Calu3 (cell line): ENCODE measurements at regions of chrX and their contacts with region 1.

Region 1: DNA sequence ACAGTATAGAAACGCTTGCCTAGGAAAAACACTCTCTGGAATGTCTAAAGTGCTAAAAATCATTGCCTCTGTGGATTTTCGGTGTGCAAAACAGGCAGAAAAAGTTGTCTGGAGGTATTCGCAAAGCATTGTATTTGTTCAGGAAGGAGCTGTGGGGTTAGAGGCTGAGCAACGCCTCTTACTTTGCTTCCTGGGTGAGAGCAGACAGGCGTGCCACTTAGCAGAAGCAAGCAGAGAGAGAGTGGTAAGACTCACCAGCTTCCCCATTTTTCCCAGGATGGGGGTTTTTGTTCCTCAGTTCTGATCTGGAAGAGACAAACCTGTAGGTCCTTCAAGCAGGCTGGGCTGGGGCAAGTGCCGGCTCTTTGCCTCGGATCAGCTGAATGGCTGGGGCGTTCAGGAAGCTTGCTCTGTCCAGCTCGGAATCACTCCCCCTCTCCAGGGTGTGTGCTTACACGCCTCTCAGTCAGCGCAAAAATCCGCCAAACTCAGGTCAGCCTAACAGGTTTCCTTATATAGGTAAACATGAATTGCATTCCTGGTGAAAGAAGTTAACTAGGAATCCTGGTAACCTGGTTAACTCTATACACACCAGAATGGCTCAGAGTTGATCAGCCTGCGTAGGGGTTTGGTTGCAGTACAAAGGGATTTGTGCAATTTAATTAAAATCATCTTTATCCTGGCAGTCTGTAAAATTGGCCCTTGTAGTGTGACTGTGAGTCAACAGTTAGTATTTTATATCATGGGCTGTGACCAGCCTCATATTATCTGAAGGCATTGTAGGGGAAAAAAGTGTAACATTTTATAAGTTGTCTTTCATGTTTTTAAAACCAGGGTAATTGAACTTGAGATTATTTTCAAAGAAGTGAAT is 213.1 kb upstream of the MID1 start:
- DNase-seq: peak; percentile 74
- H3K4me3 Mint-ChIP-seq: peak overlapping the region; percentile 76
- H3K27ac Mint-ChIP-seq: peak overlapping the region; percentile 71
- H3K4me1 Mint-ChIP-seq: peaks cover 5% of the 10 kb centered on the region
- H3K27me3 Mint-ChIP-seq: no peaks in the 10 kb centered on the region
- CTCF ChIP-seq: no peak

Region 2: DNA sequence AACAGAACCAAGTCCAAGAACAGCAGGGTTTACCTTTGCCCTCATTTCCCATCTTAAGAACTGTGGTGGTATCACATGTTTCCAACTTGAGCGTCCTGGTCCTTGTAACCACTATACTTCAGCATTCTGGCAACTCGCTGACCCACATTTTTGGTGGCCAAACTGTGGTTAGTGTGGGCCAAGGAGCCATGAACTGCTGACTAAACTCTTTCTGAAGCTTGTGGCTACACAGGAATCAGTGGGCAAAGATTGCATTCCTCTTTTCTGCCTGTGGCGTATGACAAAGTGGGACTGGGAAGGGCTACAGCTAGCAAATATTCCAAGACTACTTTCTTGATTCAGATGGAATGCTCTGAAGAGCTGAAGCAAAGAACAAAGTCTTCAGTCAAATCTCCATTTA is 106.9 kb before region 1 on chrX:
- CTCF ChIA-PET with region 1: no interaction called
- intact Hi-C with region 1: no loop called
- DNase-seq: no peak
- H3K4me3 Mint-ChIP-seq: no peak overlapping the region
- H3K27ac Mint-ChIP-seq: no peak overlapping the region
- H3K4me1 Mint-ChIP-seq: no peaks in the 10 kb centered on the region
- H3K27me3 Mint-ChIP-seq: no peaks in the 10 kb centered on the region
- CTCF ChIP-seq: no peak

Region 3: DNA sequence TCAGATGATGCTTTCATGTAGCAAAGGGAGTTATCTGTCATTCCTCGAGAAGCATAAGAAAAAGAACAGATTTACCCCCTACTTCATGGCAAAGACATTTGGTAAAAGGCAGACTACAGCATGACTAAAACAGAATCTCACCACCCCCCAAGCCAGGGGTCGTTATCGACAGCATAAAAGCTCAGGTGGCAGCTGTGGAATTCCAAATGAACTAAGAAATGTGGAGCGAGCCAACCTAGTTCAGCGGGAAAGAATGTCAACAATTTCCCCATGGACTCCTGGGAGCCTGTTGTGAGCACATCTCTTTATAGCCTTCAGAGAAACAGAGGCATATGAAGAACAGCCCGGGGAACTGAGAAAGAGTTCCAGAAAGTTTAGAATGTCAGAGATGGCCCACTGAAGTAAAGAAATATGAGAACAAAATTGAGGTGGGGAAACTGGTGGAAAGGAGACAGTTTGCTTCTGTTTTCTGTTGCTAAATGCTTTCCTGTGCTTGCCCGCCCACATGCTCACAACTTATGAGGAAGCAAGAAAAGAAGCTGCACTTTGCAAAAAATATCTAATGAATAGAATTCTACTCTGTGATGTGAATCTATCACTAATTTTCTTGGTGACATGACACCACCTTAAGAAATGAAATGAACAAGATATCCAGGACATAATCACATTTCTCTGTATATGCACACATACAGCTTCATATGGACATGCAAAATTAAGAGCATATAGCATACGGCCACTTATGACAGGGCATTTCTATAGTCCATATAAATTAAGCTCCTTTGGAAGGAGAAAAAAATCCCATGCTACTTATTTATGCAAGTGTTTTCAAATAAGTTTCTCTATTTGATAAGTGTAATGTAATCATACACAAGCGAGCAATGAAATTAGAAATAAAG is 77.8 kb before region 1 on chrX:
- CTCF ChIA-PET with region 1: no interaction called
- intact Hi-C with region 1: loop called (anchors 5 kb)
- DNase-seq: peak; percentile 6
- H3K4me3 Mint-ChIP-seq: no peak overlapping the region
- H3K27ac Mint-ChIP-seq: peak overlapping the region; percentile 23
- H3K4me1 Mint-ChIP-seq: peaks cover 23% of the 10 kb centered on the region
- H3K27me3 Mint-ChIP-seq: no peaks in the 10 kb centered on the region
- CTCF ChIP-seq: no peak

Region 4: GRCh38 chrX:10781847-10782530 is 51.5 kb before region 1 on chrX:
- CTCF ChIA-PET with region 1: no interaction called
- intact Hi-C with region 1: no loop called
- DNase-seq: no peak
- H3K4me3 Mint-ChIP-seq: no peak overlapping the region
- H3K27ac Mint-ChIP-seq: no peak overlapping the region
- H3K4me1 Mint-ChIP-seq: peaks cover 23% of the 10 kb centered on the region
- H3K27me3 Mint-ChIP-seq: no peaks in the 10 kb centered on the region
- CTCF ChIP-seq: no peak

Region 5: DNA sequence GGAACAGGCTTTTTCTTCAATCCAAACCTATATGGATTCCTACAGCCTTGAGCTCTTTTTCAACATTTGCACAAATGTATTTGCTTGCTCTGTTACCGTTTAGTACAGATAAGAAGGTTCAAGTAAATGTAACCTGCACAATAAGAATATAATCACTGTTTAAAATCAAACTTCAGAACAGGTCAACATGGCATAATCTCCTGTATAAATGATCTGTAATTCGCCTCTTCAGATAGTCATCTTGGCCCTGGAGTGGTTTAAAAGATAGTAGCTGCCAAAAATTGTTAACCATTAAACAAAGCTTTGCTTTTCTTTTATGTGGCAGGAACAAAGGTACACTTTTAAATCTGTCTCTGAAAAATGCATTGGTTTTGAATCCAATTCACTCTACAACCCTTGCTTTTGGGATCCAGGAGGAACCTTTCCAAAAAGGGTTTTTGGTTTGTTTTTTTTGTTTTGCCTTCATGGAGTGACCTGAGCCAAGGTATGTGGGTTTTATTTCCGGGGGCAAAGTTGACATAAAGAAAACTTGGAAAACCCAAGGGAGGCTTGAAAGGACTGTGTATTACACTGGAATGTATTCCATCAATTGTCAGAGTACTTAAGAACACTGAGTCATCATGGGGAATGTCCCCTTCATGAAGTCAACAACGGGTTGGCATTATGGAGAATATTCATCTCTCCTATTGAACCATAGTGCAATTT is 67.2 kb after region 1 on chrX:
- CTCF ChIA-PET with region 1: no interaction called
- intact Hi-C with region 1: loop called (anchors 2 kb)
- DNase-seq: peak; percentile 13
- H3K4me3 Mint-ChIP-seq: peak overlapping the region; percentile 37
- H3K27ac Mint-ChIP-seq: peak overlapping the region; percentile 82
- H3K4me1 Mint-ChIP-seq: peaks cover 19% of the 10 kb centered on the region
- H3K27me3 Mint-ChIP-seq: no peaks in the 10 kb centered on the region
- CTCF ChIP-seq: no peak

Region 6: GRCh38 chrX:11064851-11065600 is 231.5 kb after region 1 on chrX:
- CTCF ChIA-PET with region 1: no interaction called
- intact Hi-C with region 1: loop called (anchors 10 kb)
- DNase-seq: peak; percentile 19
- H3K4me3 Mint-ChIP-seq: no peak overlapping the region
- H3K27ac Mint-ChIP-seq: no peak overlapping the region
- H3K4me1 Mint-ChIP-seq: no peaks in the 10 kb centered on the region
- H3K27me3 Mint-ChIP-seq: no peaks in the 10 kb centered on the region
- CTCF ChIP-seq: no peak